ENCODE measurements at regions of chr5 and their contacts with region 1.

Region 1: GRCh38 chr5:72018146-72018803 is 89.0 kb upstream of the MAP1B start:
- DNase-seq: no peak
- H3K4me3 ChIP-seq: no peak overlapping the region
- H3K27me3 ChIP-seq: peaks cover 13% of the 10 kb centered on the region
- CTCF ChIP-seq: peak; percentile 94

Region 2: GRCh38 chr5:72000707-72001106 is 17.6 kb before region 1 on chr5:
- CTCF ChIA-PET with region 1: interaction called, 13 read pairs
- POLR2A ChIA-PET with region 1: no interaction called
- DNase-seq: no peak
- H3K4me3 ChIP-seq: no peak overlapping the region
- H3K27me3 ChIP-seq: peaks cover 3% of the 10 kb centered on the region; the same call in 1 of the 2 replicates
- CTCF ChIP-seq: no peak

Region 3: DNA sequence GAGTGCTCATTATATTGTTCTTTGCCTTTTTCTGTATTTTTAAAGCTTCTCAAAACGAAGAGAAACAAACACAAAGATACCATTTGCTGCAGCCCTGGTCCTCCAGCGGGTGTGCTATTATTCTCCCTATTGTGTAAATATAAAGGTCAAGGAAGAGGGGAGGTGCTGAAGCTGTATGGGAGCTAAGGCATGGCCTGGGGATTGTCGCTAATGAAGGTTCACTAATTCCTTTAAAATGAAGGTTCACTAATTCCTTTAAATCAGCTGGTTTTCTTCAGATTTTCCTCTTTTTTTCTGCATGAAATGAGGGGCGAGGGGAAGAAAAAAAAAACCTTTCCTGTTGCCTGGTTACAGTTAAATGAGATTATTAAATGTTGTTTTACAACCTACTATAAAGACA is 14.5 kb after region 1 on chr5:
- CTCF ChIA-PET with region 1: interaction called, 11 read pairs
- POLR2A ChIA-PET with region 1: no interaction called
- DNase-seq: no peak
- H3K4me3 ChIP-seq: no peak overlapping the region
- H3K27me3 ChIP-seq: no peaks in the 10 kb centered on the region; the same call in 1 of the 2 replicates
- CTCF ChIP-seq: no peak

Region 4: DNA sequence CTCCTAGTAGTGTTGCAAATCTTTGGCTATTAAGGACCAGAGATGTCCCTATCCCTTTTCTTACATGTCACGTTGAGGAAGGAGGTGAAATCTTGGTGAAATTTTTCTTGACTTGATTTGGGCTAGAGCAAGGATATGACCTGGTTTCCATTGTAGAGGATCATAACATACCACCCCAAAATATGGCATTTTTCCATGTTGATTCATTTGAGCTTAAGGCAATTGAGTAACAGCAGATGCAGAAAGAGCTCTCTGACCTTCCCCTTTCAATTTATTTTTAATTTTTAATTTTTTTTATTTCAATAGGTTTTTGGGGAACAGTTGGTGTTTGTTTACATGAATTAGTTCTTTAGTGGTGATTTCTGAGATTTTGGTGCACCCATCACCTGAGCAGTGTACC is 27.8 kb after region 1 on chr5:
- CTCF ChIA-PET with region 1: no interaction called
- POLR2A ChIA-PET with region 1: no interaction called
- DNase-seq: no peak
- H3K4me3 ChIP-seq: no peak overlapping the region
- H3K27me3 ChIP-seq: peaks cover 4% of the 10 kb centered on the region
- CTCF ChIP-seq: no peak

Region 5: DNA sequence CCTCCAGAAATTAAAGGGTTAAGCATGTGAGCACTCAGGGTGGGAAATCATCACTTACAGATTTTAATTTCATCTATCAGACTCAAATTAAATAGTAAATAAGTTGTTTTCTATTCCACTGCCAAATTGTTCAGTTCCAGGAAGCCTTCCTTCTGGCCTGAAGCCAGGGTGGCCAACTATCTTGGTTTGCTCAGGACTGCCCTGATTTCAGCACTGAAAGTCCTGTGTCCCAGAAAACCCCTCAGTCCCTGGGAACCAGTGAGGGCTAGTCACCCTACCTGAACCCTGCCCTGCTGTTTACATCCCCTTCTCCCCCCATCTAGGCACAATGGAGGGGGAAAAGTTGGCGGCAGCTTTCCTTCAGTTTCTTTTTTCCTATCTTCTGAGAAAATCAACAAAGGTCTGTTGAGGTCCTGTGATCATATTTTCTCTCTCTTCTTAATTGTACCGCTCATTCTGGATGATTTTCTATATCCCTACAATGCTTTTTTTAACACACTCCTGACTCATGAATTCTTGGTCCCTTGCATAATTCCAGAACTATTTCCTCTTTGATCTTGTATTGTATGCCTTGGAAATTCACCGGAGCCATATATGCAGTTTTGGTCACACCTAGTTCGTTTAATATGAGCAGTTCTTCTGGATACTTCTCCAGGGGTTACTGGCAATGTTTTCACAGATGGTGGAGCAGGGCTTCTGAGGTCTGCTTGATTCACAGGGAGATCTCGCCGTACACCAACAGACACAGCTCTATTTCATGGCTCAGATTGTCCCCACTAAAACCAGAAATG is 192.8 kb after region 1 on chr5:
- CTCF ChIA-PET with region 1: no interaction called
- POLR2A ChIA-PET with region 1: no interaction called
- DNase-seq: no peak
- H3K4me3 ChIP-seq: no peak overlapping the region
- H3K27me3 ChIP-seq: no peaks in the 10 kb centered on the region
- CTCF ChIP-seq: no peak

Measured in BJ (cell line).